Spleen (tissue), 13 donors: ENCODE measurements at regions of chr2 and their contacts with region 1.

Region 1: DNA sequence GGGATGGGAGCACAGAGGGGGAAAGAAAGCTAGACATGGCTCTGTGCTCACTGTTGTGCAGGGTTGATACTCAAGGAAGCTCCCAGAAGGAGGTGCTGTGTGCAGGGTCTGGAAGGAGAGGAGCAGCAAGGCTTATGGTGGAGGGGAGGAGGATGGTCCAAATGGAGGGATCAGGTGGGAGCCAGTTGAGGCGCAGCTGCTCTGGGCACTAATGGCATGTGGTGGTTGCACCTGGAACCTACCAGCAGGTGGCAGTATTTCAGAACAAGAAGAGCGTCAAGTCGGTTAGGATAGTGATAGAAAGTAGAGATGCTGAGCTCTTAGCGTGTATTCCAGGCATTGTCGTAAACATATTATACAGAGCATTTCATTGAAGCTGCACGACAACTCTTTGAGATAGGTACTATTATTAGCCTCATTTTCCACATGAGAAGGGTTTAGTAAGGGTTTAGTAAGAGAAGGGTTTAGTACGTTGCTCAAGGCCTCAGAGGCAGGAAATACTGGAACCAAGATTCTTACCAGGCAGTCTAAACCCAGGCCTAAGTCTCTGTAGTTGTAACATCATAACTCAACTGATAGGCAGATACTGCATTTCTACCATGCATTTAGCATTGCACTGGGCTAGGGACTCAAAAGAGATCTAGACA is 223.7 kb downstream of the CYP26B1 start:
- DNase-seq: no peak
- H3K4me3 ChIP-seq: no peak overlapping the region
- H3K27ac ChIP-seq: no peak overlapping the region
- H3K4me1 ChIP-seq: peaks cover 0 to 5% (median 0%) of the 10 kb centered on the region in 6 donors
- H3K27me3 ChIP-seq: no peaks in the 10 kb centered on the region
- CTCF ChIP-seq: peak; percentile 56 to 90 (median 80)
- POLR2A ChIP-seq: no peak

Region 2: GRCh38 chr2:71976685-71977084 is 52.7 kb after region 1 on chr2:
- intact Hi-C with region 1: no loop called
- DNase-seq: no peak
- H3K4me3 ChIP-seq: no peak overlapping the region
- H3K27ac ChIP-seq: no peak overlapping the region
- H3K4me1 ChIP-seq: no peaks in the 10 kb centered on the region
- H3K27me3 ChIP-seq: peaks cover 0 to 11% (median 0%) of the 10 kb centered on the region in 7 donors
- CTCF ChIP-seq: no peak
- POLR2A ChIP-seq: no peak

Region 3: DNA sequence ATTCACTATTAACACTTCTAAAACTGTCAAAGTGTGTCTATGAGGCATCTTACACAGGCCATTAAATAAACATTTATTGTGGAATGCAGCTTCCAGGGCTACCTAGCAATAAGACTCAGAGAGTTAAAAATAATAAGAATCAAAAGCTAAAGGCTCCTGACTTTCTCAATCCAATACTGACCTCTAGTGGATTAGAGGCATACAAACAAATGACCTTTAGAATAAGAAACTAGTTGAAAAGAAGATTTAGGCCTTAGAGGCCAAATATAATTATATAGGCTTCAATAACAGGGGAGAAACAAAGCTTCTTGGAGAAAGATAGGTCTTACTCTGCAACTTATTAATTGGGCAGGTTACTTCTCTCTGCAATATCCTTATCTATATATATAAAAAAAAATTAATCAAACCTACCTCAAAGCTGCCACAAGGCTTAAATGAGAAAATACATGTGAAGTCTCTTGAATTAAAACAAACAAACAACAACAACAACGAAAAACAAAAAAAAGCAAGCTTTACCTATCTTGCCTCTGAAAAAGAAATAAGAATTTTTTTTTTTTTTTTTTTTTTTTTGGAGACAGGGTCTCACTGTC is 655.7 kb after region 1 on chr2:
- intact Hi-C with region 1: loop called (anchors 5 kb)
- DNase-seq: no peak
- H3K4me3 ChIP-seq: no peak overlapping the region
- H3K27ac ChIP-seq: no peak overlapping the region
- H3K4me1 ChIP-seq: peaks cover 0 to 14% (median 5%) of the 10 kb centered on the region in 6 donors
- H3K27me3 ChIP-seq: no peaks in the 10 kb centered on the region
- CTCF ChIP-seq: peak in 9 of 11 experiments; percentile 20 to 69 (median 57)
- POLR2A ChIP-seq: no peak

Region 4: DNA sequence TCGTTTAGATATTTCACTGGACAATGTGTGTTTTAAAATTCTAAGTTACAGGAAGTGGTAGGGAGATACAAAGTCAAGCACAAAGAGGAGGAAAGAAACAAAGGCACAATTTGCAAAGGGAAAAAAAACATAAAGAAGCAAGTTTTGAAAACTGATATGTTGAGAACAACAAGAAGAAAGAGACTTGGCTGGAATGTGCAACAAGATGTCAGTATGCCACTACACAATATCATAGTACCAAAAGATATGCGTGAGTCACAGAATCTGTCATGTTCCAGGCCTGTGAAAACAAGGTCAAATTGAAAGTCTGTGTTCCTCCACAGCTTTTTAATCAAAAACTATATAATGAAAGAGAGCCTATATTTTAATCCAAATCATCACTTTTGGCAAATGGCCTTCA is 889.8 kb after region 1 on chr2:
- intact Hi-C with region 1: no loop called
- DNase-seq: no peak
- H3K4me3 ChIP-seq: no peak overlapping the region
- H3K27ac ChIP-seq: no peak overlapping the region
- H3K4me1 ChIP-seq: no peaks in the 10 kb centered on the region
- H3K27me3 ChIP-seq: no peaks in the 10 kb centered on the region
- CTCF ChIP-seq: no peak
- POLR2A ChIP-seq: no peak